Adrenal gland (tissue), 19 donors: ENCODE measurements at regions of chr4 and their contacts with region 1.

Region 1: GRCh38 chr4:40065010-40065409 is 8.4 kb downstream of the N4BP2 start:
- DNase-seq: no peak
- H3K4me3 ChIP-seq: no peak overlapping the region
- H3K27ac ChIP-seq: no peak overlapping the region
- H3K4me1 ChIP-seq: no peaks in the 10 kb centered on the region
- H3K27me3 ChIP-seq: no peaks in the 10 kb centered on the region
- CTCF ChIP-seq: no peak
- POLR2A ChIP-seq: no peak

Region 2: GRCh38 chr4:39786838-39787237 is 278.2 kb before region 1 on chr4:
- intact Hi-C with region 1: no loop called
- DNase-seq: no peak
- H3K4me3 ChIP-seq: no peak overlapping the region
- H3K27ac ChIP-seq: no peak overlapping the region
- H3K4me1 ChIP-seq: no peaks in the 10 kb centered on the region
- H3K27me3 ChIP-seq: no peaks in the 10 kb centered on the region
- CTCF ChIP-seq: no peak
- POLR2A ChIP-seq: no peak

Region 3: DNA sequence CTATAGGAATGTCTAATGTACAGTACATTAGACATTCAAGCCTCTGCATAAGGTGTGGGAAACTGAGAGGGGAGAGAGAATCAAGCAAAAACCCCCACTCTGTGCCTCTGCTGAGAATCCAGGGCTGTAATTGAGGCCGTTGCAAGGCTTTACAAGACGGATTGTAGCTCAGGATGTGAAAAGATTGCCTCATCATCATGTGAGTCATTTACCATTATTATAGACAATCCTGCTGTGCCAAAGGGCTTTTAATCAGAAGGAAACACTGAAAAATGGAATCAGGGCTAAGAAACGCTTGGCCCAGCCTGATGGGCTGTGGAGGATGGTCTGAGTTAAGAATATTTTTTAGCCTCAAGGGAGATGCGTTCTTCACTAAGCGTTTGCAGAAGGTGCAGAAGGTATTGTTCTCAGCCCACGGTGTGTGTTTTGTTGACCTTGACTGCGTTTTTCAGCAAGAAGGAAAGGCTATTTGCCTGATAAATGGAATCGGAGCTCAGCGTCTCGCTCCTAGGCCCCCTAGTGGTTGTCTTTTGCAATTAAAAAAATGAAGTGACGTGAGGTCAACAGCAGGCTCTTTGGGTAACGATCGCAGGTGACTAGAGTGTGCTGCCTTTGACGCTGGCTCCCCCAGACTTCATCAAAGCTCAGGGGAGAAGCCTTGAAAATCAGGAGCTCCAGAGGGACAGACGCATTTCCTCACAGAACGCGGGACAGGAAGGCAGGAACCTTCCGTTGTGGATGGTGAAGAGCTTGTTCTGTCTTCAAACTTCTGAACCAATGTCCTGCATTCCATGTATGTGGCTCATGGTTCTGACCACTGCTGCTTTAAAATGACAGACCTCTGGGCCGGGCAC is 252.0 kb after region 1 on chr4:
- intact Hi-C with region 1: loop called in 1 of 2 experiments (anchors 10 kb)
- DNase-seq: peak; percentile 58 to 87 (median 67)
- H3K4me3 ChIP-seq: peak overlapping the region in 2 of 4 donors; percentile 5 to 37
- H3K27ac ChIP-seq: peak overlapping the region; percentile 60 to 86 (median 79)
- H3K4me1 ChIP-seq: peaks cover 0 to 14% of the 10 kb centered on the region in 2 donors
- H3K27me3 ChIP-seq: no peaks in the 10 kb centered on the region
- CTCF ChIP-seq: peak; percentile 76 to 92 (median 87)
- POLR2A ChIP-seq: peak in 1 of 2 donors; percentile 33